Endothelial cell of umbilical vein (primary cell): ENCODE measurements at regions of chr21 and their contacts with region 1.

Region 1: DNA sequence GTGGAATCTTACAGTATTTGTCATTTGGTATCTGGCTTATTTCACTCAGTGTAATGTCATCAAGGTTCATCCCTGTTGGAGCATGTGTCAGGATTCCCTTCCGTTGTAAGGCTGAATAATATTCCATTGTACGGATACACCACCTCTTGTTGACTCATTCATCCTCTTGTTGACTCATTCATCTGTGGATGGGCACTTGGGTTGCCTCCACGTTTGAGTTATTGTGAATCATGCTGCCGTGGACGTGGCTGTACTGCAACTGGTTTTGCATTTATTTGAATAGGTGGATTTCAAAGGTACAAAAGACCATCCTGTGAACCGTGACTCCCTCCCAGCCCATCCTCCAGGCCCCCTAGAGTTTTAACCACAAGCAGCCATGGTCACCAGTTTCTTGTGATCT is 11.9 kb upstream of the TCP10L start:
- DNase-seq: peak; percentile 85
- H3K4me3 ChIP-seq: no peak overlapping the region
- H3K27ac ChIP-seq: peak overlapping the region; percentile 68
- H3K4me1 ChIP-seq: peaks cover 9% of the 10 kb centered on the region
- H3K27me3 ChIP-seq: no peaks in the 10 kb centered on the region
- CTCF ChIP-seq: no peak
- POLR2A ChIP-seq: no peak

Region 2: DNA sequence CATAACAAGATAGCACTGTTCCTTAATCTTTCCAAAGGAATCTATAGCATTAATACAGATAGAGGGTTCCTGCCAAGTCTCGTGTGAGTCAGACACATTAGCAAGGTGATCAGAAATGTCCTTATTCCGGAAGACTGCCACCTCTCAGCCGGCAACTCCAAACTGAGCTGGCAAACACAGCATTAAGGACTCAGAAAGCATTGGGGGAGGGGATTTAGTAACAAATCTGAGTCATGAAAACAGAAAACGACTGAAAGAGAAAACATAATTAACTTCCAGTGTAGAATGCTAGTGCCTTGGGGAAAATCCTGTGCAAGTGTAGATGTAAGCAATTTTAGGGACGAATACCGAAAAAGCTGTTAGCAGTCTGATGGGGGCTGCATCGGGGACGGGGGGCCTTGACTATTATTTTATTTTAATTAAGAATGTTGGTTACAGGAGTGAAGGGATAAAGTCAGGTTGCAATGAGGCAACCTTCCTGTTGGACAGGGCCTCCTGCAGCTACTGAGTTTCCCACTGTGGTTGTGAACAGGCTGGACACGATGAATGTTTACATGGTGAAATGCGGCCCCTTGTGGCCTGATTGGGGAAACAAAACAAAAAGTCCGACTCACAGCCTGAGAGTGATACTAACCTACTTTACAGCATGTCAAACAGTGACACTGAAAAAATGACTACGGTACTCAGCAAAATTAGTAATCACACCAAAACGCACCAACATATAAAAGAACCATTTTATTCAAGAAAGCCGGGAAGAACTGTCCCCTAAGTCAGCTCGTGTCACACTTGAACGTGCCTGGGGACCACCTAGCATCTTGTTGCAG is 339.0 kb before region 1 on chr21:
- CTCF ChIA-PET with region 1: interaction called, 17 read pairs
- POLR2A ChIA-PET with region 1: no interaction called
- dilution Hi-C with region 1: no loop called
- intact Hi-C with region 1: no loop called
- DNase-seq: peak; percentile 80
- H3K4me3 ChIP-seq: no peak overlapping the region
- H3K27ac ChIP-seq: no peak overlapping the region
- H3K4me1 ChIP-seq: peaks cover 13% of the 10 kb centered on the region
- H3K27me3 ChIP-seq: peaks cover 0 to 1% of the 10 kb centered on the region in 2 experiments
- CTCF ChIP-seq: peak; percentile 68 to 82
- POLR2A ChIP-seq: no peak

Region 3: DNA sequence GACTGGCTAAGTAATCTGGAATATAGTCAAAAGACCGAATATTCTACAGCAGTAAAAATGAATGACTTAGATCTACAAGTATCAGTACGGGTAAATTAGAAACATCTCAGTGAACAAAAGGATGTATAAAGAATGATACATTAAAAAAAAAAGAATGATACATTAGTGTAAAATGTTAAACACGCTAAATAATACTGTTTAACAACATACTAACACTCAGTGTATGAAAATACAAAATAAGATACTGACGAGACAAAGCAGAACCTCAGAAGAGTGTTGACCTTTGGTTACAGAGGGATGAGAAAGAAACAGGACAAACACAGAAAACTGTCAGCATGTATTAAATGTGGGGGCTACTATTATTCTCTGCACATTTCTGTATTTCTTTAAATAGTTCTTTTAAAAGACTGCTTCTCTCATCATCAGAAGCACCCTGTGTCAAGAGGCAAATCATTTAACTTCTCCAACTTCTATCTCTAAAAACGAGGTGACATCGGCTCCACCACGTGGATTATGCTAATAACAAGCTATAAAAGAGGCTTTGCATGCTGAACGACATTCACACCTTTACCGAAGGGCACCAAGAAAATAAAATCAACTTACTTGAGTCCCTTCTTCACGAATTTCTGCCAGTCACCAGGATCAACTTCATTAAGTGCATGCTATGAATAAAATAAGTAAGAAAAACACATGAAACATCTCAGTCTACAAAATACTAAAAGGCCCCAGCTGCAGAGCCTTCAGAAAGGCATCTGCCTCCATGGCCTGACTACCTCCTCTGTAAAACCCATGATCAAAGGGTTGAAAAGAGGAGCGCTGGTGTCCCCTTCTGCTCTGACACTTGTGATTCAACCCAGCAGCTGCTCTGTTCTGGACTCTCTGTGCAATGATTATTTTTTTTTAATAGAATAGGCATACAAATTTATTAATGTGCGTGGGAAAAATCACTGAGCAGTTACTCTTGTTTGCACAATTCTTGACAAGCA is 256.0 kb before region 1 on chr21:
- CTCF ChIA-PET with region 1: interaction called, 11 read pairs
- POLR2A ChIA-PET with region 1: no interaction called
- dilution Hi-C with region 1: no loop called
- intact Hi-C with region 1: no loop called
- DNase-seq: no peak
- H3K4me3 ChIP-seq: no peak overlapping the region
- H3K27ac ChIP-seq: no peak overlapping the region
- H3K4me1 ChIP-seq: peaks cover 6% of the 10 kb centered on the region
- H3K27me3 ChIP-seq: no peaks in the 10 kb centered on the region
- CTCF ChIP-seq: no peak
- POLR2A ChIP-seq: no peak

Region 4: DNA sequence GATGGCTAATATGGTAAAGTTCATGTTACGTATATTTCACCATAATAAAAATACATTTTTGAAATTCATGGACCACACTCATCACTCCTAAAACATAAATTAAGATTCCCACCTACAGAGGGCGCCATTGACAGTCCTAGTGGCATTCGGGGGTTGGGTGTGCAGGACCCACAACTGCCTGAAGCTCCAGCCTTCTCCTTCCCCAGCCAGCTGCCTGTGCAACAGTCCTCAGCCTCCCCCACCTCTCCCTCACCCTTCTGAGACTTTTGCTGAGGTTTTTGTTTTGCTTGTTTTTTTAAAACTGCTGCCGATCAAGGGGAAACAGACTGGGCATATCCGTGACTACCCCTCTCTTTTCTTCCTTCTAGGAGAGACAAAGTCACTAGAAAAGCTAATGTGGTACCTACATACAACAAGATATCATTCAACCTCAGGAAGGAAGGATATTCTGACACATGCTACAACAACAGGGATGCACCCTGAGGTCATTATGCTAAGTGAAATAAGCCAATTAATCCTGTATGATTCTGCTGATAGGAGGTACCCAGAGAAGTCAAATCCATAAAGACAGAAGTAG is 193.9 kb before region 1 on chr21:
- CTCF ChIA-PET with region 1: interaction called, 286 read pairs
- POLR2A ChIA-PET with region 1: interaction called, 4 read pairs
- dilution Hi-C with region 1: no loop called
- intact Hi-C with region 1: loop called (anchors 1 kb)
- DNase-seq: peak; percentile 86
- H3K4me3 ChIP-seq: no peak overlapping the region
- H3K27ac ChIP-seq: peak overlapping the region; percentile 22
- H3K4me1 ChIP-seq: peaks cover 16% of the 10 kb centered on the region
- H3K27me3 ChIP-seq: no peaks in the 10 kb centered on the region
- CTCF ChIP-seq: peak; percentile 63 to 66
- POLR2A ChIP-seq: no peak

Region 5: GRCh38 chr21:32569261-32570230 is 27.7 kb before region 1 on chr21:
- CTCF ChIA-PET with region 1: interaction called, 29 read pairs
- POLR2A ChIA-PET with region 1: interaction called, 8 read pairs
- dilution Hi-C with region 1: no loop called
- intact Hi-C with region 1: loop called (anchors 2 kb)
- DNase-seq: peak; percentile 87
- H3K4me3 ChIP-seq: peak overlapping the region; percentile 38 to 71 (median 62)
- H3K27ac ChIP-seq: peak overlapping the region; percentile 79
- H3K4me1 ChIP-seq: peaks cover 11% of the 10 kb centered on the region
- H3K27me3 ChIP-seq: no peaks in the 10 kb centered on the region
- CTCF ChIP-seq: peak; percentile 85 to 90
- POLR2A ChIP-seq: peak; percentile 66

Region 6: GRCh38 chr21:32753818-32754610 is 156.8 kb after region 1 on chr21:
- CTCF ChIA-PET with region 1: no interaction called
- POLR2A ChIA-PET with region 1: no interaction called
- dilution Hi-C with region 1: no loop called
- intact Hi-C with region 1: no loop called
- DNase-seq: no peak
- H3K4me3 ChIP-seq: no peak overlapping the region
- H3K27ac ChIP-seq: no peak overlapping the region
- H3K4me1 ChIP-seq: no peaks in the 10 kb centered on the region
- H3K27me3 ChIP-seq: no peaks in the 10 kb centered on the region
- CTCF ChIP-seq: no peak
- POLR2A ChIP-seq: no peak

Region 7: DNA sequence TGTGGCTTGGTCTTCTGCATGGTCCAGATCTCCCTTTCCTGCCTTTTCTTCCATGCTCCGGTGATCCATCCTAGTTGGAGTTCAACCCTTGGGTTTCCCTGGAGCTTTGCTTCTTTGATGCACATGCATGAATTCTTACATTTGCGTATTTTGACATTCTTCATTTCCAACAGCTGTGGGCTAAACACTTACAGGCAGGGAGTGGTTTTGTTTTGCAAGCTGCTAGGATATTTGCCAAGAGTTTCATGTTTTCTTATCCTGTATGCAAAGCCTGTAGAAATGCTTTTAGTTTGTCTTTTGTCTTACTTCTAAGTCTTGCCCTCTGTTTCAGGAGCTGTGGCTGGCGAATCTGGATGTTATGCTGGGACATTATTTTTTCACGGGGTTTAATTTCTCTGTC is 264.7 kb after region 1 on chr21:
- CTCF ChIA-PET with region 1: no interaction called
- POLR2A ChIA-PET with region 1: no interaction called
- dilution Hi-C with region 1: no loop called
- intact Hi-C with region 1: no loop called
- DNase-seq: no peak
- H3K4me3 ChIP-seq: no peak overlapping the region
- H3K27ac ChIP-seq: no peak overlapping the region
- H3K4me1 ChIP-seq: no peaks in the 10 kb centered on the region
- H3K27me3 ChIP-seq: peaks cover 2 to 4% of the 10 kb centered on the region in 2 experiments
- CTCF ChIP-seq: no peak
- POLR2A ChIP-seq: no peak